Panc1 (cell line): ENCODE measurements at regions of chr21 and their contacts with region 1.

Region 1: GRCh38 chr21:32916522-32917099 is 109.1 kb upstream of the OLIG2 start:
- DNase-seq: no peak
- ATAC-seq: no peak
- H3K4me3 ChIP-seq: no peak overlapping the region
- H3K27ac ChIP-seq: no peak overlapping the region
- H3K4me1 ChIP-seq: no peaks in the 10 kb centered on the region
- H3K27me3 ChIP-seq: no peaks in the 10 kb centered on the region; the same call in 1 of the 2 replicates
- CTCF ChIP-seq: 0 out of 2 replicates have a peak, but pooled peaks have one; percentile 19

Region 2: DNA sequence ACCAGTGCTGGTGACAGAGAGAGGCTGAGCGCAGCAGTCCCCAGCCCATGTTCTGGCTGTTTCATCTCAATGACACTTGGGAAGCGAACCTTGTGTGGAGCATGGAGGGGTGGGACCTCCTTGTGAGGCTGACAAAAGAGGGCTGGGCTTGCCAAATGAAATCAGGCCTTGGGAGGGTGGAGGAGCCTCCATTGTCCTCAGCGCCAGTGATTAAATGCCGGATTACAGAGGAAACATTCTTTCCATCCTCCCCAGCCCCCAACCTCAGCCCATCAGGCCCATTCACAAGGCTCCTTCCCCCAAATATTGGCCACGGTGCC is 81.7 kb before region 1 on chr21:
- CTCF ChIA-PET with region 1: no interaction called
- POLR2A ChIA-PET with region 1: no interaction called
- in situ Hi-C with region 1: no loop called
- intact Hi-C with region 1: loop called (anchors 10 kb)
- DNase-seq: no peak
- ATAC-seq: no peak
- H3K4me3 ChIP-seq: no peak overlapping the region
- H3K27ac ChIP-seq: no peak overlapping the region
- H3K4me1 ChIP-seq: no peaks in the 10 kb centered on the region
- H3K27me3 ChIP-seq: no peaks in the 10 kb centered on the region; the same call in 1 of the 2 replicates
- CTCF ChIP-seq: no peak